ENCODE measurements at regions of chr6 and their contacts with region 1.

Region 1: GRCh38 chr6:137264311-137265075 is 45.3 kb upstream of the IFNGR1 start:
- DNase-seq: no peak
- H3K4me3 ChIP-seq: no peak overlapping the region
- H3K4me1 ChIP-seq: peaks cover 4% of the 10 kb centered on the region
- H3K27me3 ChIP-seq: no peaks in the 10 kb centered on the region; the same call in 1 of the 2 replicates

Region 2: GRCh38 chr6:137475103-137475502 is 210.6 kb after region 1 on chr6:
- in situ Hi-C with region 1: no loop called
- DNase-seq: no peak
- H3K4me3 ChIP-seq: no peak overlapping the region
- H3K4me1 ChIP-seq: peaks cover 20% of the 10 kb centered on the region
- H3K27me3 ChIP-seq: no peaks in the 10 kb centered on the region

Region 3: GRCh38 chr6:137652966-137653705 is 388.6 kb after region 1 on chr6:
- in situ Hi-C with region 1: loop called (anchors 5 kb)
- DNase-seq: peak; percentile 92 to 93
- H3K4me3 ChIP-seq: no peak overlapping the region
- H3K4me1 ChIP-seq: peaks cover 38% of the 10 kb centered on the region
- H3K27me3 ChIP-seq: no peaks in the 10 kb centered on the region

Measured in HAP-1 (cell line).